Caco-2 (cell line): ENCODE measurements at regions of chr18 and their contacts with region 1.

Region 1: DNA sequence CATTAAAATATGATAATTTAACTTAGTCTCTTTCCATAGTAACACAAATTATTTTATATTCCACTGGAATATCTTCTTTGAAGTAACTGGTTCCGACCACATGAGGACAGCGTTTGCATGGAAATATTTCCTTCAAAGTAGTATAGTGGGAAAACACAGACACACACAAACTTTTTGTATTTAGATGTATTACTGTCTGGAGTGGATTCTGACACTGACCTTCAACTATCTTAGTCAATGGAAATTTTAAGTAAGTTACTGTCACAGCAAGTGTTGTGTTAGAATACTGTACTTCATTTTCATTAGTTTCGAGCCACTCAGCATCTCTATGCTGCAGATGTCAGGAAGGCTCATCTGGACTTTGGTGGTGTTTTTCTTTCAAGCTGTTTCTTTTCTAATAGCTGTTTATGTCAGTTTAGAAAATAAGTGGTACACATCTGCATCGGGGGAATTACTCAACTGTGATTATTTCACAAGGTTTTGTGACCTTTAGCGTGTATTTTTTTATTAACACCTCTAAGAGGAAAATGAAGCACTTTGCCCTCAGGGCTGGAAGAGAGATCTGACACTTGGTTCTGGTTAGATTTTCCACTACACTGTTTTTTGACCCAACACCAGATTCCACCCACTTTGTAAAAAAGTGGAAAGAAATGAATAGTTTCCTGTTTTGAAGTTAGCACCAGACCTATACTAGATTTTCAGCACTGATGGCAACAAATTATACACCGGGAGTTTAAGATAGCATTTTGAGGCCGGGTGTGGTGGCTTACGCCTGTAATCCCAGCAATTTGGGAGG is 18.9 kb upstream of the THOC1 start:
- DNase-seq: peak in 1 of 2 experiments; percentile 12
- H3K4me3 ChIP-seq: no peak overlapping the region
- H3K4me3 Mint-ChIP-seq: no peak overlapping the region
- H3K27ac Mint-ChIP-seq: no peak overlapping the region
- H3K4me1 ChIP-seq: no peaks in the 10 kb centered on the region
- H3K4me1 Mint-ChIP-seq: no peaks in the 10 kb centered on the region
- H3K27me3 ChIP-seq: no peaks in the 10 kb centered on the region
- H3K27me3 Mint-ChIP-seq: no peaks in the 10 kb centered on the region
- CTCF ChIP-seq: peak; percentile 32 to 50

Region 2: GRCh38 chr18:267688-268552 is 18.8 kb before region 1 on chr18 and contains the start of gene THOC1:
- CTCF ChIA-PET with region 1: no interaction called
- POLR2A ChIA-PET with region 1: no interaction called
- intact Hi-C with region 1: no loop called
- DNase-seq: peak; percentile 92 to 94
- H3K4me3 ChIP-seq: peak within 1 kb of the TSS; percentile 62
- H3K4me3 Mint-ChIP-seq: peak within 1 kb of the TSS; percentile 99
- H3K27ac Mint-ChIP-seq: peak within 1 kb of the TSS; percentile 100
- H3K4me1 ChIP-seq: peaks cover 9% of the 10 kb centered on the region
- H3K4me1 Mint-ChIP-seq: peaks cover 14% of the 10 kb centered on the region
- H3K27me3 ChIP-seq: no peaks in the 10 kb centered on the region
- H3K27me3 Mint-ChIP-seq: no peaks in the 10 kb centered on the region
- CTCF ChIP-seq: no peak
- total RNA-seq, gene THOC1: 63.1 and 65.4 TPM in 2 replicates

Region 3: DNA sequence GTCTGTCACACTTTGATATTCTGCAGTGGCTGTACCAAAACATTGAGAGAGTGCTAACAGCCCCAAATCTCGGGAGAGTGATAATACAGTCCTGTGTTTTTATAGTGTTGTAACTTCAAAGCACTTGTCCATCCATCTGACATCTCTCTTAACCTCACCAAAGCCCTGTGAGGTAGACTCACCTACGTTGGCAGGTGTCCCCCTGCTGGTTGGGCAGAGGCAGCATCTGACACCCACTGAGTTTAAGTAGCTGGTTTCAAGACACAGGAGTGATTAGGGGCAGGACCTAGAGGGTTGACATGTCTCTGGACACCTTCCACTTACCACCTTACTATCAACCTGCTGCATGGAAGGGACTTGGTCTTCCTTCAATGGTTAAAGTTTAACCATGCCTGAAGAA is 190.9 kb after region 1 on chr18:
- CTCF ChIA-PET with region 1: no interaction called
- POLR2A ChIA-PET with region 1: no interaction called
- intact Hi-C with region 1: loop called (anchors 5 kb)
- DNase-seq: peak in 1 of 2 experiments; percentile 43
- H3K4me3 ChIP-seq: no peak overlapping the region
- H3K4me3 Mint-ChIP-seq: no peak overlapping the region
- H3K27ac Mint-ChIP-seq: no peak overlapping the region
- H3K4me1 ChIP-seq: peaks cover 23% of the 10 kb centered on the region
- H3K4me1 Mint-ChIP-seq: peaks cover 35% of the 10 kb centered on the region
- H3K27me3 ChIP-seq: no peaks in the 10 kb centered on the region
- H3K27me3 Mint-ChIP-seq: no peaks in the 10 kb centered on the region
- CTCF ChIP-seq: peak; percentile 40 to 45

Region 4: DNA sequence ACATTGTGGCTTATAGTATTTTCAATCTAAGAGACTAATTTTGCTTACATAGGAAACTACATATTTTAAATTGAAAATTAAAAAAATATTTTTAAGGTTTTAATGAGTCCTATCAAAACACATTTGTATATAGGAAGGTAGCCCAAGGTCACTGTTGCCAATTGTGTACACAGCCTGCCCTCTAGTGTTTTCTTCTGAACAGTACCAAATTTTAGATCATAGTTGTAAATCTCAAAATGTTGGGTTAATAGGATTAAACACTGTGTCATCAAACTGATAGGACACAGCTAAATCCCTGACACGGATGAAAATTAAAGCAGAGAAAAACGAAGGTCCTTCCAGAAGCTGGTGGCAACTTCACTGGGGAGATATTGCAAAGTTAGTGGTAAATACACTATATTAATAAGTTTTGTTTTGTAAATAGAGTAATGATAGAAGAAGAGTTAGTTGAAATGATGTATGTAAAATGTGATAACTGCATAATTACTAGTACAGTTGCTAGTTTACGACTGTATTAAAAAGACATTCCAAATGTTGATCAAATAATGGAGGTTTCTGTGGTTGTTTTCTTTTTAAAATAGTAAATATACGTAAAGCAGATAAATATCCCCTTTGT is 329.8 kb after region 1 on chr18:
- CTCF ChIA-PET with region 1: no interaction called
- POLR2A ChIA-PET with region 1: no interaction called
- intact Hi-C with region 1: loop called (anchors 1 kb)
- DNase-seq: peak in 1 of 2 experiments; percentile 26
- H3K4me3 ChIP-seq: no peak overlapping the region
- H3K4me3 Mint-ChIP-seq: no peak overlapping the region
- H3K27ac Mint-ChIP-seq: no peak overlapping the region
- H3K4me1 ChIP-seq: no peaks in the 10 kb centered on the region
- H3K4me1 Mint-ChIP-seq: no peaks in the 10 kb centered on the region
- H3K27me3 ChIP-seq: no peaks in the 10 kb centered on the region
- H3K27me3 Mint-ChIP-seq: peaks cover 2% of the 10 kb centered on the region
- CTCF ChIP-seq: peak; percentile 65 to 67

Region 5: GRCh38 chr18:839224-840022 is 552.7 kb after region 1 on chr18:
- CTCF ChIA-PET with region 1: no interaction called
- POLR2A ChIA-PET with region 1: no interaction called
- intact Hi-C with region 1: loop called (anchors 10 kb)
- DNase-seq: peak; percentile 78 to 86
- H3K4me3 ChIP-seq: no peak overlapping the region
- H3K4me3 Mint-ChIP-seq: no peak overlapping the region
- H3K27ac Mint-ChIP-seq: no peak overlapping the region
- H3K4me1 ChIP-seq: no peaks in the 10 kb centered on the region; the same call in 1 of the 2 replicates
- H3K4me1 Mint-ChIP-seq: peaks cover 13% of the 10 kb centered on the region
- H3K27me3 ChIP-seq: no peaks in the 10 kb centered on the region
- H3K27me3 Mint-ChIP-seq: no peaks in the 10 kb centered on the region
- CTCF ChIP-seq: peak; percentile 84 to 92